Activated CD8-positive, alpha-beta T cell treated with anti-CD3 and anti-CD28 coated beads, Interleukin-2, amount 10 ng/mL, durations not matched to agents 7 days and 5 days (primary cell): ENCODE measurements at regions of chr16 and their contacts with region 1.

Region 1: GRCh38 chr16:85554112-85554813 is 58.9 kb upstream of the GSE1 start:
- DNase-seq: peak; percentile 93
- ATAC-seq: peak; percentile 57
- H3K4me3 Mint-ChIP-seq: peak overlapping the region; percentile 83
- H3K27ac Mint-ChIP-seq: peak overlapping the region; percentile 93
- H3K4me1 Mint-ChIP-seq: peaks cover 42% of the 10 kb centered on the region
- H3K27me3 Mint-ChIP-seq: no peaks in the 10 kb centered on the region

Region 2: DNA sequence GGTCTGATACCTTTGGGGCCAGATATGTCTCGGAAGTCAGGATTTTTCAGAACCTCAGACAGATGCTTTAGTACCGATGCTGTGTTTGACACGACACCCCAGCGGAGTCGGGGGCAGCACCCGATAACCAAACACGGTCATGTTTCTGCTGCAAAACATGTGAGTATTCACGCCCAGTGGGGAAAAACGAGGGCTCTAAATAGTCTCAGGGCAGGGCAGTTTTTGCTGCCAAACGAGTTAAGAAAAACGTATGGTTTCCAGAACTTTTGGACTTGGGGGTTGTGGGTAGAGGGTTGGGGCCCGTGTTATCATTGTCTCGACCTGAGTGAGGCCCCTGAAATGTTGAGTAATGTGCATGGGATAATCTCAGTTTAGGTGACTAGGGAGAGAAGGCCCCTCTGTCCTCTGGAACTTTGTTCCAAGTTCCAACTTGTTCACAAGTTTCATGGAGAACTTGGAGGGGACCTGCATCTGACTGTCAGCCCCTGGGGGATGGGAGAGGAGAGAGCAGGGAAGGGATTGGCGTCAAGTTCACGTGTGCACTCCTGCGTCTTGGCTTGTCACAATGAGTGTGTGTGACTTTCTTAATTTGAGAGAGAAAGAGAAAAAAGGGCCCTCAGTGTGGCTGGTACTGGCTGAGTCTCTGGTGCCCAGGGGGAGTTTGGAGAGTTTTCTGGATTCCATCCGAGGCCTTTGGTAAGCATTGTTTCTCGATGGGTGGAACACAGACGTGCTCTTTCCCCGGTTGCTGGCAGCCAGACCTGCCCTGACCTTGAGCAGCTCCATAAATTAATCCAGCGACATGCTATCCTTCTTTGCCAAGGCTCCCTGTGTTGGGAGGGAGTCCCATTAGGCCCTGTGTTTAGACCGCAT is 358.1 kb before region 1 on chr16:
- CTCF ChIA-PET with region 1: no interaction called
- POLR2A ChIA-PET with region 1: no interaction called
- DNase-seq: no peak
- ATAC-seq: no peak
- H3K4me3 Mint-ChIP-seq: no peak overlapping the region
- H3K27ac Mint-ChIP-seq: no peak overlapping the region
- H3K4me1 Mint-ChIP-seq: no peaks in the 10 kb centered on the region
- H3K27me3 Mint-ChIP-seq: no peaks in the 10 kb centered on the region

Region 3: DNA sequence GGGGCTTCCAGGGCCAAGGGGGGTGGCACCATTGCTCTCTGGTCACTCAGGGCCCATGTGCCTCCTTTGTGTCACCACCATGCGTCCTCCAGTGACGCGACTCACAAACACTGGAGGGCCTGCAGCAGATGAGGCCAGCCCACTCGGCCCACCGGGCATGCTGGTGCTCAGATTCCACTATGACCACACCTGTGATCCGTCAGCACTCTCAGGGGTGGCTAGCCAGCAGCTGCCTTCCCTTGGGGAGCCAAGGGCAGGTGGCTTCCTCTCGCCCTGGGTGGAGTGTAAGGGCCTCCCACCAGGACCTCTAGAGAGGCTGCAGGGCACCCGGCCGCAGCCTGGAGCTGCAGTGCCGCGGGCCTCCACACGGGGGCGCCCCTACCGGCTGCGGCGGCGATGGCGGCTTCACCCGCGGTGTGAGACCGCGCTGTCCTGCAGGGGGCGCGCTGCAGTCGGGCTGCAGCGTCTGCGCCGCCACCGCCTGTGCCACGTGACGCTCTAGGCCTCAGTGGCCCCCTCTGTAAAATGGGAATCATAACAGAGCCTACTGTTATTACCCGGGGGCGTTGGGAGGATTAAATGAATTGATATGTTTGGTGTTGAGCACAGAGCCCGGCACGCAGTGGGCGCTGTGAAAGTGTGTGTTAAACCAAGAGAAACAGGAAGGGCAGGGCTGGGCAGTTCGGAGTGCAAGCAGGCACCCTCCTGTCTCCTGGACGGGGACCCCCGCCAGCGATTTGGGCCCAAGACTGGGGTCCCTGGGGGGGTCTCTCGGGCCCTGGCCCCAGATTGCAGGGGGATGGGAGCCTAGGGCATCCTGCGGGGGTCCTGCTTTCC is 133.5 kb before region 1 on chr16:
- CTCF ChIA-PET with region 1: interaction called, 19 read pairs
- POLR2A ChIA-PET with region 1: no interaction called
- DNase-seq: peak; percentile 79
- ATAC-seq: peak; percentile 81
- H3K4me3 Mint-ChIP-seq: no peak overlapping the region
- H3K27ac Mint-ChIP-seq: no peak overlapping the region
- H3K4me1 Mint-ChIP-seq: peaks cover 9% of the 10 kb centered on the region
- H3K27me3 Mint-ChIP-seq: no peaks in the 10 kb centered on the region

Region 4: DNA sequence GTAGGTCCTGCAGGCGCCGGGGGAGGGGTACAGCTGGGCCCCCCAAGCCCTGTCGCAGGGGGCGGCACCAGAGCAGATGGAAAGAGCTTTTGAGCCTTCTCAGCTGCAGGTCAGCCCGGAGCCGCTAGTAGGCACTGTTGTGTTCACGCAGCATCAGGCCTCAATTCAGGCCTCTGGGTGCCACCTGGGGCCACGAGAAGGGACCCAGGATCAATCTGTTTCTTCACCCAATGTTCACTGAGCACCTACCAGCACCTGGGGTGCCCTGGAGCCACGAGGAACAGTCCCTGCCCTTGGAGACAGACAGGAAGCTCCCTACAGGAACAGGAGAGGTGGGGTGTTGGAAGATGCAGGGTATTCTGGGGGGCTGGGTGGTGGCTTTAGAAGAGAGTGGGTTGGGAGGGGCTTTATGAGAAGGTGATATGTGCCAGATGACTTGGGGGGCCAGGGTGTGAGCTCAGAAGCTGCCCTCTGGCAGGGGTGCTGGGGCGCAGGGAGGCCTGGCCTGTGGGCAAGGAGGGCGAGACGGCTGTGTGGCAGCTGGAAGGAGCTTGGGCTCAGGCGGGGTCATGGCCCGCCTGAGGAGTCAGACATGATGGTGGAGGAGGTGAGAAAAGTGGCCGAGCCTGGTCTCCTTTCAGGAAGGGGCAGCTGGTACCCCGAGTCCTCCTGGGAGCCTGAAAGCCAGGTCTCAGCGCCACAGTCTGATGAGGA is 63.0 kb before region 1 on chr16:
- CTCF ChIA-PET with region 1: interaction called, 15 read pairs
- POLR2A ChIA-PET with region 1: interaction called, 3 read pairs
- DNase-seq: peak; percentile 52
- ATAC-seq: no peak
- H3K4me3 Mint-ChIP-seq: no peak overlapping the region
- H3K27ac Mint-ChIP-seq: peak overlapping the region; percentile 25
- H3K4me1 Mint-ChIP-seq: peaks cover 19% of the 10 kb centered on the region
- H3K27me3 Mint-ChIP-seq: peaks cover 3% of the 10 kb centered on the region

Region 5: GRCh38 chr16:85569615-85570212 is 15.5 kb after region 1 on chr16:
- CTCF ChIA-PET with region 1: interaction called, 24 read pairs
- POLR2A ChIA-PET with region 1: interaction called, 67 read pairs
- DNase-seq: peak; percentile 80
- ATAC-seq: peak; percentile 62
- H3K4me3 Mint-ChIP-seq: peak overlapping the region; percentile 74
- H3K27ac Mint-ChIP-seq: peak overlapping the region; percentile 81
- H3K4me1 Mint-ChIP-seq: peaks cover 66% of the 10 kb centered on the region
- H3K27me3 Mint-ChIP-seq: no peaks in the 10 kb centered on the region